Colonic mucosa (tissue), 4 donors: ENCODE measurements at regions of chr4 and their contacts with region 1.

Region 1: DNA sequence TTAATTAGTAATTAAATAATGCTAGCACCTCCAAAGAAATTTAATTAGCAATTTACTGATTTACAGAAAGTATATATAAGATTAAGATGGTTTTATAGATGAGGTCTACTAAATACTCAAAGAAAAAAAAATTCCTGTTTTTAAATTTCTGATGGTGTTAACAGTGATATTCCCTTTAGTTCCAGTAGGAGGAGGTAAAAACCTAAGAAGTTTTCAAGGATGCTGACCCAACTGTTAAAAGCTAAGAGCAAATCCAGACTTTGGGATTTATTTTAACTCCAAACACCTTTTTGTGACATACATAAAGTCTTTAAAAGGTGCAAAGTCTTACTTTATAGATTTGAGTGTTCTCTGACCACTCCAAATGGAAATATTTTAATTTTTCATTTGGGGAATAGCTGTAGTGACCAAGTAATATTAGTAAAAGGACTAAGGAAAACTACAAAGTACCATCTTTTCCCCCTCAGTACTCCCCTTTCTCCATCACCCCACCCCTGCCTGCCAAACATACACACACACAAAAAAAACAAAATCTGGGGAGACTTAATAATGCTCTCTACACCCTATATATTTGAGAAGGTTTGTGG is 34.2 kb upstream of the CSN1S1 start:
- DNase-seq: no peak
- H3K4me3 ChIP-seq: no peak overlapping the region
- H3K27ac ChIP-seq: no peak overlapping the region
- H3K4me1 ChIP-seq: no peaks in the 10 kb centered on the region
- H3K27me3 ChIP-seq: no peaks in the 10 kb centered on the region
- CTCF ChIP-seq: peak; percentile 36

Region 2: DNA sequence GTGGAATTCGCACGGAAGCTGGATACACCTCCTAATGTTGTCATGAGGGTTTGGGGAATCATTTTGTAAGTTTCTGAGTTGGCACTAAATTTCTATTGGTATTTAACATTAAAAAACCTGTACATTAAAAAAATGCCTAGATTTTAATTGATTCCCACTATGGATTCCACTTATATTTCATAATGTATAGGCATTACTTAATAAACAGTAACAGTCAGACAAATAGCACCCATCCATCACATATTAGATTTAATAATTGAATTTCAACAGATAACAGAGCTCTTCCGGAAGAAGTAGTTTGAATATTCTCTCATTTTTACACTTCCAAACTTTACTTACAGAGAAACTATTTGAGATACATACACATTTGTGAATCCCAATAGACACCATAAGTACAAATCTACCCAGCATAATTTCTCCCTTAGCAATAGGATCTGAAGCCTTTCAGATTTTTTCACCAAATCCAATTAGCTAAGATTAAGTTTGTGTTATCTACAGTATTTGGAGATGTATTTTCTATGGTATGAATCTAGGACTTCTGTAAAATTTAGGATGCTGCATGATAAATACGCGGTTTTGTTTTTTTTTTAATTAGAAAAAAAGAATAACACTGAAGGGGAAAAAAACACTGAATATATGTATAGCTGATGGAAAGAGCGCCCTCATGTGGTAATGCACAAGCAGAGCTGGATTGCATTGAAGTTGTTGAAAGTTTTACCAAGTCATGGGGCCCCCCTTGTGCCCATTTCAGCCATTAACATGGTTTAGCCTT is 286.7 kb after region 1 on chr4:
- intact Hi-C with region 1: loop called (anchors 5 kb)
- DNase-seq: peak; percentile 27
- H3K4me3 ChIP-seq: no peak overlapping the region
- H3K27ac ChIP-seq: no peak overlapping the region
- H3K4me1 ChIP-seq: no peaks in the 10 kb centered on the region
- H3K27me3 ChIP-seq: no peaks in the 10 kb centered on the region
- CTCF ChIP-seq: peak; percentile 66

Region 3: GRCh38 chr4:70337886-70338420 is 441.3 kb after region 1 on chr4:
- intact Hi-C with region 1: no loop called
- DNase-seq: no peak
- H3K4me3 ChIP-seq: no peak overlapping the region
- H3K27ac ChIP-seq: no peak overlapping the region
- H3K4me1 ChIP-seq: no peaks in the 10 kb centered on the region
- H3K27me3 ChIP-seq: no peaks in the 10 kb centered on the region
- CTCF ChIP-seq: no peak

Region 4: GRCh38 chr4:70463335-70463734 is 566.7 kb after region 1 on chr4:
- intact Hi-C with region 1: no loop called
- DNase-seq: no peak
- H3K4me3 ChIP-seq: no peak overlapping the region
- H3K27ac ChIP-seq: no peak overlapping the region
- H3K4me1 ChIP-seq: no peaks in the 10 kb centered on the region
- H3K27me3 ChIP-seq: no peaks in the 10 kb centered on the region
- CTCF ChIP-seq: no peak

Region 5: GRCh38 chr4:70505151-70505748 is 608.6 kb after region 1 on chr4:
- intact Hi-C with region 1: loop called (anchors 10 kb)
- DNase-seq: peak; percentile 50
- H3K4me3 ChIP-seq: no peak overlapping the region
- H3K27ac ChIP-seq: no peak overlapping the region
- H3K4me1 ChIP-seq: no peaks in the 10 kb centered on the region
- H3K27me3 ChIP-seq: no peaks in the 10 kb centered on the region
- CTCF ChIP-seq: peak; percentile 74